ENCODE measurements at regions of chr6 and their contacts with region 1.

Region 1: GRCh38 chr6:149990618-149991471 is 27.1 kb downstream of the ULBP1 start:
- DNase-seq: peak; percentile 59
- ATAC-seq: peak; percentile 70
- H3K4me3 Mint-ChIP-seq: peak overlapping the region; percentile 75
- H3K27ac Mint-ChIP-seq: peak overlapping the region; percentile 5
- H3K4me1 Mint-ChIP-seq: peaks cover 26% of the 10 kb centered on the region
- H3K27me3 Mint-ChIP-seq: peaks cover 66% of the 10 kb centered on the region
- CTCF ChIP-seq: no peak

Region 2: DNA sequence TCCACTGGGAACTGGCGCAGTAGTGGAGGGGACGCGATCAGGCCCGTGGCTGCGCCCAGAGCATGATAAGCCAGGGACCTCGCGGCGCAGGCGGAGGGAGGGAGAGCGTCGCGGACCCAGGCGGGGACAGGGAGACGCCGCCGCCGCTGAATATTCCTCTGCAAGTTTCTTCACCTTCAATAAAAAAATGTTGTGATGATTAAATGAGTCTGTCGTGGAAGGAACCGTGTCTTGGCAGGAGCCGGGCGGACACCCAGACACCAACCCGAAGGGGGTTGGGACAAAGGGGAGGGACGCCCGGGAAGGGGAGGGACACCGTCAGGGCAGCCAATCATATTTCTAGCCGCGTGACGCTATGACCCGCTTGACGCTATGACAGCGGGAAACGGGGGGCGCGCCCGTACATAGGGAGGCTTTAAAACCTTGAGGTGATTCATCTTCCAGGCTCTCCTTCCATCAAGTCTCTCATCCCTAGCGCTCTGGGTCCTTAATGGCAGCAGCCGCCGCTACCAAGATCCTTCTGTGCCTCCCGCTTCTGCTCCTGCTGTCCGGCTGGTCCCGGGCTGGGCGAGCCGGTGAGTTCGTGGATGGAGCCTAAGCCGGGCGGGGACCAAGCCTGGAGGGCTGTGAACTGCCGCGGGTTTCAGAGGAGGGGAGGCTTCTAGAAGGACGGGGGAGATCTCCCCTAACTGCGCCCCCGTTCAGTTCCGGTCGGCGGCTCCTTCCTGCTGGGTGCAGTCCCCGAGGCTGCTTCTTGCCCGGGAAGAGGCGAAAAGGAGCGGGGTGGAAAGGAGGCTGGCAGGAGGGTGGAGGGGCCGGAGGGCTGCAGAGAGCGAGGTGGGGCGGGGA is 49.0 kb before region 1 on chr6 and contains the start of gene ULBP2:
- CTCF ChIA-PET with region 1: no interaction called
- POLR2A ChIA-PET with region 1: no interaction called
- intact Hi-C with region 1: loop called (anchors 2 kb)
- DNase-seq: peak; percentile 53
- ATAC-seq: peak; percentile 70
- H3K4me3 Mint-ChIP-seq: peak within 1 kb of the TSS; percentile 89
- H3K27ac Mint-ChIP-seq: peak within 1 kb of the TSS; percentile 73
- H3K4me1 Mint-ChIP-seq: peaks cover 43% of the 10 kb centered on the region
- H3K27me3 Mint-ChIP-seq: peaks cover 46% of the 10 kb centered on the region
- CTCF ChIP-seq: no peak
- total RNA-seq, gene ULBP2: 0.29 and 0.37 TPM in 2 replicates

Region 3: DNA sequence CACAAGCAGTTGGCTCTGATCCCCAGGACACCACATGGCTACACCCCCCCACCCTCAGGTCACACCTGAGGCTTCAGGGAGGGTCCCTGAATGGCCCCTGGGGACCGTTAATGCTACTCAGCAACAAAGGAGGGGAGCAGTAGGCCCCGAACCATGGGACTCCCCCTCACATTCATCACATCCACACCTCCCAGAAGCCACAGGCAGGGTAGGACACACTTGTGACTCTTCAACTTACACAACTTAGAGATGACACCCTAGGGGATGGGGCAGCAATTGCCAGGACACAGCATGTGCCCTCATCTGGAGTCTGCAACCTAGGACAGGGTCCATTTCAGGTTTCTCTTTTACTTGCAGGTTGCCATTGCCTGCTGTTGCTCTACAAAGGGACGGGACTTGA is 77.3 kb after region 1 on chr6:
- CTCF ChIA-PET with region 1: no interaction called
- POLR2A ChIA-PET with region 1: no interaction called
- intact Hi-C with region 1: no loop called
- DNase-seq: no peak
- ATAC-seq: no peak
- H3K4me3 Mint-ChIP-seq: peak overlapping the region; percentile 84
- H3K27ac Mint-ChIP-seq: no peak overlapping the region
- H3K4me1 Mint-ChIP-seq: peaks cover 22% of the 10 kb centered on the region
- H3K27me3 Mint-ChIP-seq: peaks cover 13% of the 10 kb centered on the region
- CTCF ChIP-seq: no peak